Activated CD4-positive, alpha-beta T cell treated with anti-CD3 and anti-CD28 coated beads for 36 hours (primary cell): ENCODE measurements at regions of chr3 and their contacts with region 1.

Region 1: GRCh38 chr3:9932843-9933560 is 632 bp upstream of the CRELD1 start:
- DNase-seq: peak; percentile 95
- ATAC-seq: peak; percentile 76
- H3K4me3 Mint-ChIP-seq: peak overlapping the region; percentile 96
- H3K27ac Mint-ChIP-seq: peak overlapping the region; percentile 95
- H3K4me1 Mint-ChIP-seq: peaks cover 29% of the 10 kb centered on the region
- H3K27me3 Mint-ChIP-seq: no peaks in the 10 kb centered on the region

Region 2: DNA sequence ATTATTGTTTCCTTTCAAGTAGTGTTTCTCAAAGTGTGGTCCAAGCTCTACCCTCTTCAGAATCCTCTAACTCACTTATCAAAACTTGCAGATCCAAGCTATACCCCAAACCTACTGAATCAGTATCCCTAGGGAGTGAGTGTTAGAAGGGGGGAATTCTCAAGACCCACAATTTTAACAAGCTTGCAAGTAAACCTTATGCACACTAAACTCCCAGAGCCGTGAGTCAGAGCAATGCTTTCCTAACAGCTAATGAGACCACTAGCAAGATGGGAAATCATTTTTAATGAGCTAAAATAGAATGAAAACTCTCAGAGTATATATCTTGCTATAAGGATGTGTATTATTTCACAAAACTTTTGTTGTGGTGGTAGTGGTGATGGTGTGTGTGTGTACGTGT is 642.4 kb before region 1 on chr3:
- CTCF ChIA-PET with region 1: no interaction called
- POLR2A ChIA-PET with region 1: no interaction called
- intact Hi-C with region 1: no loop called
- DNase-seq: no peak
- ATAC-seq: no peak
- H3K4me3 Mint-ChIP-seq: no peak overlapping the region
- H3K27ac Mint-ChIP-seq: no peak overlapping the region
- H3K4me1 Mint-ChIP-seq: no peaks in the 10 kb centered on the region
- H3K27me3 Mint-ChIP-seq: peaks cover 10% of the 10 kb centered on the region

Region 3: GRCh38 chr3:9455596-9456131 is 477.3 kb before region 1 on chr3:
- CTCF ChIA-PET with region 1: no interaction called
- POLR2A ChIA-PET with region 1: no interaction called
- intact Hi-C with region 1: no loop called
- DNase-seq: no peak
- ATAC-seq: no peak
- H3K4me3 Mint-ChIP-seq: no peak overlapping the region
- H3K27ac Mint-ChIP-seq: no peak overlapping the region
- H3K4me1 Mint-ChIP-seq: peaks cover 17% of the 10 kb centered on the region
- H3K27me3 Mint-ChIP-seq: no peaks in the 10 kb centered on the region

Region 4: DNA sequence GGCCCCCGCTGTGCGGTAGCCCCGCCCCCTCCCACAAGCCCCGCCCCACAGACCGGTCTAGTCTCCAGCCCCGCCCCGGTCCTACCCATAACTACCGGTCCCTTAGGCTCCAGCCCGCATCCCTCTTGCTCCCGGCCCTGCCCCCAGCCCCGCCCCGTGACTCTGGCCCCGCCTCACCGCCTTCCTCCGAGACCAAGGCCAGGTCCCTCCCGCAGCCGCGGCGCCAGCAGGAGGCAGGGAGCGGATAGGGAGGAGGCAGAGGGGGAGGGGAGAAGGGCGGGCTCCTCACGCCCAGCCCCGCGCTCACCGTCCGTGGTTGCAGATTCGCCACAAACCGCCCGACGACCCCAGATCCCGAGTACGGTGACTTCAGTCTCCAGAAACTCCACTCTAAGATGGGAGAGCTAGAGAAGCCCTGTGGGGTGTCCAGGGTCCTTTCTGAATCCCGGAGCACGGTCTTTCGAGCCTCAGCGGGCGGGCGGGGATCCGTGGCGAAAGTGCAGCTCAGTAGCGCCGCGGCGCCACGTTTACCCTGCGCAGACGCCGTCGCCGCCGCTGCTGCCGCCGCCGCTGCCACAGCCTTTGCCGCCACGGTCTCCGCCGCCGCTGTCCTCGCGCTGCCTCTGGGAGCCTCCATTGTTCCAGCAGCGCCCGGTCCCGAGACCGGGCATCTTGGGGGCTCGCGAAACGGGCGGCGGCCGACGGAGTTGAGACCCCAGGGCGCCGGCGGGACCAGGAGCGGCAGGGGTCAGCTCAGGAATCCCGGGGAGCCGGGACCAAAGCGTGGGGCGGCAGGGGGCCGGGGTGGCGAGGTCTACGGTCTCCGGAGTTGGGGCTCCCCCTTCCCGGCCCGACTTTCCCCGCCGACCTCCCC is 201.6 kb before region 1 on chr3 and contains the start of gene BRPF1:
- CTCF ChIA-PET with region 1: interaction called, 8 read pairs
- POLR2A ChIA-PET with region 1: no interaction called
- intact Hi-C with region 1: loop called (anchors 1 kb)
- DNase-seq: peak; percentile 100
- ATAC-seq: peak; percentile 96
- H3K4me3 Mint-ChIP-seq: peak within 1 kb of the TSS; percentile 79
- H3K27ac Mint-ChIP-seq: peak within 1 kb of the TSS; percentile 96
- H3K4me1 Mint-ChIP-seq: peaks cover 67% of the 10 kb centered on the region
- H3K27me3 Mint-ChIP-seq: no peaks in the 10 kb centered on the region
- total RNA-seq, gene BRPF1: 23.3 to 25.9 TPM

Region 5: GRCh38 chr3:9792405-9793160 is 140.4 kb before region 1 on chr3 and contains the starts of genes ARPC4 and TADA3:
- CTCF ChIA-PET with region 1: no interaction called
- POLR2A ChIA-PET with region 1: interaction called, 3 read pairs
- intact Hi-C with region 1: loop called in 1 of 2 experiments (anchors 1 kb)
- DNase-seq: peak; percentile 95
- ATAC-seq: peak; percentile 79
- H3K4me3 Mint-ChIP-seq: peak within 1 kb of the TSS; percentile 99
- H3K27ac Mint-ChIP-seq: peak within 1 kb of the TSS; percentile 100
- H3K4me1 Mint-ChIP-seq: peaks cover 73% of the 10 kb centered on the region
- H3K27me3 Mint-ChIP-seq: no peaks in the 10 kb centered on the region
- total RNA-seq, gene ARPC4: 164 to 231 TPM
- total RNA-seq, gene TADA3: 80.7 to 96.4 TPM

Region 6: DNA sequence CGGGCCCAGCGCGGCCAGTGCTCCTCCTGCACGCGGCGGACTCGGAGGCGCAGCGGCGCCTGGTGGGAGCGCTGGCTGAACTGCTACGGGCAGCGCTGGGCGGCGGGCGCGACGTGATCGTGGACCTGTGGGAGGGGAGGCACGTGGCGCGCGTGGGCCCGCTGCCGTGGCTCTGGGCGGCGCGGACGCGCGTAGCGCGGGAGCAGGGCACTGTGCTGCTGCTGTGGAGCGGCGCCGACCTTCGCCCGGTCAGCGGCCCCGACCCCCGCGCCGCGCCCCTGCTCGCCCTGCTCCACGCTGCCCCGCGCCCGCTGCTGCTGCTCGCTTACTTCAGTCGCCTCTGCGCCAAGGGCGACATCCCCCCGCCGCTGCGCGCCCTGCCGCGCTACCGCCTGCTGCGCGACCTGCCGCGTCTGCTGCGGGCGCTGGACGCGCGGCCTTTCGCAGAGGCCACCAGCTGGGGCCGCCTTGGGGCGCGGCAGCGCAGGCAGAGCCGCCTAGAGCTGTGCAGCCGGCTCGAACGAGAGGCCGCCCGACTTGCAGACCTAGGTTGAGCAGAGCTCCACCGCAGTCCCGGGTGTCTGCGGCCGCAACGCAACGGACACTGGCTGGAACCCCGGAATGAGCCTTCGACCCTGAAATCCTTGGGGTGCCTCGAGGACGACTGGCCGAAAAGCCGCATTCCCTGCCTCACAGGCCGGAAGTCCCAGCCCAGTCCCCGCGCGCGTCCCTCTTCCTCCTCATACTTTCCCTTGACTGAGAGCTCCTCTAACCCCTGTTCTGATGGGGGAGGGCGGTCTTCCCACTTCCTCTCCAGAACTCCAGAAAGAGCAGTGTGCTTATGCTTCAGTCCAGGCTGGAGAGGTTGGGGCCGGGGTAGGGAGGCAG is 17.5 kb before region 1 on chr3:
- CTCF ChIA-PET with region 1: interaction called, 32 read pairs
- POLR2A ChIA-PET with region 1: interaction called, 7 read pairs
- intact Hi-C with region 1: loop called (anchors 1 to 2 kb)
- DNase-seq: peak; percentile 62
- ATAC-seq: peak; percentile 45
- H3K4me3 Mint-ChIP-seq: peak overlapping the region; percentile 66
- H3K27ac Mint-ChIP-seq: peak overlapping the region; percentile 37
- H3K4me1 Mint-ChIP-seq: peaks cover 19% of the 10 kb centered on the region
- H3K27me3 Mint-ChIP-seq: peaks cover 5% of the 10 kb centered on the region

Region 7: GRCh38 chr3:9986237-9986725 is 53.3 kb after region 1 on chr3:
- CTCF ChIA-PET with region 1: interaction called, 23 read pairs
- POLR2A ChIA-PET with region 1: interaction called, 16 read pairs
- intact Hi-C with region 1: loop called (anchors 1 to 2 kb)
- DNase-seq: no peak
- ATAC-seq: peak; percentile 31
- H3K4me3 Mint-ChIP-seq: peak overlapping the region; percentile 94
- H3K27ac Mint-ChIP-seq: peak overlapping the region; percentile 98
- H3K4me1 Mint-ChIP-seq: peaks cover 32% of the 10 kb centered on the region
- H3K27me3 Mint-ChIP-seq: no peaks in the 10 kb centered on the region

Region 8: DNA sequence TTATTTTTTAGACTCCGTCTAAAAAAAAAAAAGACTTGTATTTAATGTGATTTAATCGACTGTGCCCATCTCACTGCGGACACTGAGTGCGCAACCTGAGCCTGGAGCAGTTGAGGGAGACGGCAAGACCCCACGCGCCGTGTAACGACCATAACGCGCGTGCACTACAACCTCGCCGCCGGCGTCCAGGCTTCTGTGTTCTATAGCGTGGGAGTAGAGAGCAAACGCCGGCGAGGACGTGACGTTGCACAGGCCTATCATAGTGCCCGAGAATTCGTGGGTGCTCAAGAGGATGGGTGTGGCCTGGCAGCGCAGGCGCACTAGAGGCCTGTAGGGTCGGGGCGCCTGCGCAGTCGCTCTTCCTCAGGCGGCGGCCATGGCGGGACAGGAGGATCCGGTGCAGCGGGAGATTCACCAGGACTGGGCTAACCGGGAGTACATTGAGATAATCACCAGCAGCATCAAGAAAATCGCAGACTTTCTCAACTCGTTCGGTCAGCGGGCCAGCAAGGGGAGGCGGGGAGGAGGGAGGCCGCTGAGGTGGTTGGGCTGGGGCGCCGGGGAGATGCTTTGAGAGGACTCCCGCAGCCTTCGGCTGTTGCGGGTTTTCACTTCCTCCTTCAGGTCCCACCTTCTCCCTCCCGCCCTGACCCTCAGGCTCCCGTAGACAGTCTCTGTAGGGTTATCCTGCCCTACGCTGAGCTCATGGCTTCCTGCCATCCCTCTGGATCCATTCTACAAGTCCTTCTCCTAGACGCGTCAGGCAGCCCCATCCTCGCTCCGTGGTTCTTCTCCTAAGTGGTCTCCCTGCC is 182.5 kb after region 1 on chr3 and contains the start of gene BRK1:
- CTCF ChIA-PET with region 1: no interaction called
- POLR2A ChIA-PET with region 1: interaction called, 7 read pairs
- intact Hi-C with region 1: loop called in 1 of 2 experiments (anchors 1 kb)
- DNase-seq: peak; percentile 98
- ATAC-seq: peak; percentile 98
- H3K4me3 Mint-ChIP-seq: peak within 1 kb of the TSS; percentile 96
- H3K27ac Mint-ChIP-seq: peak within 1 kb of the TSS; percentile 92
- H3K4me1 Mint-ChIP-seq: peaks cover 35% of the 10 kb centered on the region
- H3K27me3 Mint-ChIP-seq: no peaks in the 10 kb centered on the region
- total RNA-seq, gene BRK1: 83.4 to 86.6 TPM

Region 9: DNA sequence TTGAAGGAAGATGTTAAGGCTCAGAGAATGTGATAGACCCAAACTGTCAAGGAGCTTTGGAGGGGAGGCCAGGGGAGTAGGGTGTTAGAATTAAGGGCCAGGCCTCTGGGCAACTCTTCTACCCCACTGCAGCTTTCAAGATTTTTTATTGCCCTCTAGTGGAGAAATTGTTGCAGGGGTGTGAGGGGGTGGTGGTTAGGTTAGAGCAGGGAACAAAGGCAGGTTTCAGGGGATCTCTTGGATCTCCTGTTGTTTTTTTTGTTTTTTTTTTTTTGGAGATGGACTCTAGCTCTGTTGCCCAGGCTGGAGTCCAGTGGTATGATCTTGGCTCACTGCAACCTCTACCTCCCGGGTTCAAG is 389.3 kb after region 1 on chr3:
- CTCF ChIA-PET with region 1: interaction called, 7 read pairs
- POLR2A ChIA-PET with region 1: no interaction called
- intact Hi-C with region 1: loop called in 1 of 2 experiments (anchors 1 kb)
- DNase-seq: peak; percentile 37
- ATAC-seq: peak; percentile 22
- H3K4me3 Mint-ChIP-seq: no peak overlapping the region
- H3K27ac Mint-ChIP-seq: peak overlapping the region; percentile 3
- H3K4me1 Mint-ChIP-seq: peaks cover 23% of the 10 kb centered on the region
- H3K27me3 Mint-ChIP-seq: peaks cover 4% of the 10 kb centered on the region